Activated naive CD4-positive, alpha-beta T cell treated with anti-CD3 and anti-CD28 coated beads, Interleukin-2, amount 10 ng/mL, durations not matched to agents 7 days and 5 days (primary cell): ENCODE measurements at regions of chr10 and their contacts with region 1.

Region 1: DNA sequence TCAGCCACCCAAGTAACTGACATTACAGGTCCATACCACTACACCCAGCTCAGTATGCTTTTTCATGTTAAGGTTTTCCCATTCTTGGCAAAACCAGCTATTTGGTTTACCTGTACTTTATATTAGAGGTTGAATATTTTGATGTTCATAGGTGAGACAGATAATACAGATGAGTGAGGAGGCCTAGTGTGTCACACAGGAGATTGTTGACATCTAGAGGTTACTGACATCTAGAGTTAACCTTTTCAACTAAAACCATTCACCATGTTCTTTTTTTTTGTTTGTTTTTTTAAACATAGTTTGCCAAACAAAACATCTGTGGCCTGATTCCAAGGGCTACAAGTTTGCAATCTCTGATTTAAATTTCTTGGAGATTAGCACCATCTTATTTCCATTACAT is 8.0 kb downstream of the GHITM start:
- DNase-seq: no peak
- H3K4me3 Mint-ChIP-seq: no peak overlapping the region
- H3K27ac Mint-ChIP-seq: no peak overlapping the region
- H3K4me1 Mint-ChIP-seq: peaks cover 13% of the 10 kb centered on the region
- H3K27me3 Mint-ChIP-seq: no peaks in the 10 kb centered on the region

Region 2: GRCh38 chr10:83945982-83946718 is 201.2 kb before region 1 on chr10:
- CTCF ChIA-PET with region 1: no interaction called
- DNase-seq: no peak
- H3K4me3 Mint-ChIP-seq: no peak overlapping the region
- H3K27ac Mint-ChIP-seq: no peak overlapping the region
- H3K4me1 Mint-ChIP-seq: no peaks in the 10 kb centered on the region
- H3K27me3 Mint-ChIP-seq: no peaks in the 10 kb centered on the region

Region 3: GRCh38 chr10:84205049-84205852 is 57.9 kb after region 1 on chr10:
- CTCF ChIA-PET with region 1: interaction called, 146 read pairs
- DNase-seq: peak; percentile 84
- H3K4me3 Mint-ChIP-seq: no peak overlapping the region
- H3K27ac Mint-ChIP-seq: no peak overlapping the region
- H3K4me1 Mint-ChIP-seq: no peaks in the 10 kb centered on the region
- H3K27me3 Mint-ChIP-seq: peaks cover 20% of the 10 kb centered on the region

Region 4: GRCh38 chr10:84214612-84215235 is 67.4 kb after region 1 on chr10:
- CTCF ChIA-PET with region 1: interaction called, 43 read pairs
- DNase-seq: peak; percentile 61
- H3K4me3 Mint-ChIP-seq: no peak overlapping the region
- H3K27ac Mint-ChIP-seq: no peak overlapping the region
- H3K4me1 Mint-ChIP-seq: no peaks in the 10 kb centered on the region
- H3K27me3 Mint-ChIP-seq: peaks cover 14% of the 10 kb centered on the region

Region 5: DNA sequence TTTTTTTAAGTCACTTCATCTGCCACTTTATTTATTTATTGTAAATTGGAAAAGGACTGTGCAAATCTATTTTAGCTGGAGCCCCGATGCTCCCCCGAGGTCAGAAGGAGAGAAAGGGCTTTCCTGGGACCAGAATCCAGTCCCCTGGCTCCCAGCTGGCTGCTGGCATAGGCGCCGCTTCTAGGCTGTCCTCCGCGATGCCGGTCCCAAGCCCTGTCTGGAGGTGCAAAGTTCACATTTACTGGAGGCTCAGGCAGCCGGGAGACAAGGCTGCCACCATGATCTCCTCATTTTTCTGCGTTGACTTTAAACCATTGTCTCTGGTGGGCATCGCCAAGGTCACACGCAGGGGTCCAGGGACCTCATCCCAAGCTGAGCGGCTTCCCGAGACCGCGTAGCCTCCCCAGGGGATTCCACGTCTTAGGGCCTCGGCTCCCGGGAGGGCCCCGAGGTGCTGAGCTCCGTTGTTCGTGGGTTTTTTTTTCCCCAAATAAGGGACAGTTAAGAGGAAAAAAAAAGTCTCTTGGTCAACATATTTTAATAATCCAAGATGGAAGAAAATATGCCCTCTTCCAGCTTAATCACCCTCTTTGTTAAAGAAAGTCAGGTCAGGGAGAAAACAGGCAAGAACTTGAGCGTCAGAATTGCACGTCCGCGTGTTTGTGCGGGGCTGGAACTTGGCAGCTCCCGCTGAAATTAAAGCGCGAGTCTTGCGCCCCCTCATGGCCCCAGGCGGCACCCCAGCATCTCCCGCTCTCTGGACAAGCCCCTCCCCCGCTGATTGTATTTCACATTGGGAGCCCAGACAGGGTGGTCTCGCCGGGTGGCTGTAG is 109.4 kb after region 1 on chr10:
- CTCF ChIA-PET with region 1: interaction called, 14 read pairs
- DNase-seq: peak; percentile 65
- H3K4me3 Mint-ChIP-seq: no peak overlapping the region
- H3K27ac Mint-ChIP-seq: no peak overlapping the region
- H3K4me1 Mint-ChIP-seq: peaks cover 5% of the 10 kb centered on the region
- H3K27me3 Mint-ChIP-seq: peaks cover 36% of the 10 kb centered on the region